ENCODE measurements at regions of chr19 and their contacts with region 1.

Region 1: GRCh38 chr19:45092747-45093678 is at the start of gene PPP1R37:
- DNase-seq: peak; percentile 91

Region 2: GRCh38 chr19:44972802-44973201 is 120.2 kb before region 1 on chr19:
- CTCF ChIA-PET with region 1: no interaction called
- POLR2A ChIA-PET with region 1: no interaction called
- DNase-seq: no peak

Region 3: GRCh38 chr19:45038931-45039893 is 53.8 kb before region 1 on chr19 and contains the start of gene CLASRP:
- CTCF ChIA-PET with region 1: no interaction called
- POLR2A ChIA-PET with region 1: interaction called, 10 read pairs
- DNase-seq: peak; percentile 94

Region 4: GRCh38 chr19:45079063-45079910 is 13.7 kb before region 1 on chr19 and contains the start of gene GEMIN7:
- CTCF ChIA-PET with region 1: no interaction called
- POLR2A ChIA-PET with region 1: interaction called, 44 read pairs
- DNase-seq: peak; percentile 86

Region 5: DNA sequence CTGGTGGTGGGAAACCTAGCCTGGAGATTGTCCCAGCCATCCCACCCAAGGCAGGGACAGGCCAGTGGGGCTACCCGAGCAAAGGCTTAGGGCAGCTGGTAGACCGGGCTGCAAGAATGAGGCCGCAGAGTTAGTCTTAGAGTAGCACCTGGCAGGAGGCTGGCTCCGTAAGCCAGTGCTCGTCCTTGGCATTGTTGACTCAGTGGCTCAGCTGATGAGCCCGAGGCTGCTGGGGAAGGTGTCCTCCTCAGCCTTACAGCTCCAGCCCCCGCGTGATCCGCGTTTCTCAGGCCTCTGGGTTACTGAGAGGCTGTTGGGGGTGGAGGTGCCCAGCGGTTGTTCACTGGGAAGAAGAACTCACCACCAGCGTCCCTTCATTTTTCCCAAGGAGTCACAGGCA is 24.7 kb after region 1 on chr19:
- CTCF ChIA-PET with region 1: no interaction called
- POLR2A ChIA-PET with region 1: interaction called, 10 read pairs
- DNase-seq: no peak

Region 6: DNA sequence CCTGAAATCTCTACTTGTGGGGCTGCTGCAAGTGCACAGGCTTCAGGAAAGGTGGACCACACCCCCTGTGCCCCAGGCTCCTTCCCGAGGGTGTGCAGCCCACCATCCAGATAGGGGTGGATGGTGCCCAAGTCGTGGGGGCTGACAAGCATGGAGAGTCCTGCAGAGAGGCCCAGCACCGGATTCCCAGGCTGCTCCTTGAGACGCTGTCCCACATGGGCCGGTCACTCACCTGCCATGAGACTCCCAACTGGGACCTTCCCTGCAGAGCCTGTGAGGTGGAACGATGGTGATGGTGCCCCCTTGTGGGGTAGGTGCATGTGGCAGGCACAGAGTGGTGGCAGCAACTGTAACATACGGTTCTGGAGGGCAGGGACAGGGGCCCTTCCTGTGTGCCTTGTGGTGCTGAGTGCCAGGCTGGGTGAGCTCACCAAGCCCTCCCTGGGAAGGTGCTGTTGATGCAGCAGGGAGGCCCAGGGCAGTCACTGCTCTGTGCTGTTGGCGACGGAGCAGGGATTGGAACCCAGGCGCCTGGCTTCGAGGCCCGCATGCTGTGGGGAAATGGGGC is 33.0 kb after region 1 on chr19:
- CTCF ChIA-PET with region 1: no interaction called
- POLR2A ChIA-PET with region 1: interaction called, 10 read pairs
- DNase-seq: peak; percentile 70

Region 7: DNA sequence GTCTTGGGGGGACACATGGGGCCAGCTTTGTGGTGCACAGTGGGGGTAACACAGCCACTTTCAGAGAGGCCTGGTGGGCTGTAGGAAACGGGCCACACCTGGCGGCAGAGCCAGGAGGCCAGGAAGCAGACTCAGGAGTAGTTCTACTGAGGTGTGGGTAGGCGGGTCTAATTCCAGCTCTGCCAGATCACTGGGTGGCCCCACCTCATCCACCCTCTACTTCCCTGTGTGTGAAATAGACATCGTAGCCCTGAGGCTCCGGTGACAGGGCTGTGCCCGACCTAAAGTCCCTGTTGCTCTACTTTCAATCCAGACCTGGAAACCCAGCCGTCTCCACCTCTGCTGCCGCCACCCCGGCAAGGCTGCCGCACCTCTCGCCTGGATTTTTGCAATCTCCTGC is 63.7 kb after region 1 on chr19:
- CTCF ChIA-PET with region 1: no interaction called
- POLR2A ChIA-PET with region 1: no interaction called
- DNase-seq: no peak

Region 8: DNA sequence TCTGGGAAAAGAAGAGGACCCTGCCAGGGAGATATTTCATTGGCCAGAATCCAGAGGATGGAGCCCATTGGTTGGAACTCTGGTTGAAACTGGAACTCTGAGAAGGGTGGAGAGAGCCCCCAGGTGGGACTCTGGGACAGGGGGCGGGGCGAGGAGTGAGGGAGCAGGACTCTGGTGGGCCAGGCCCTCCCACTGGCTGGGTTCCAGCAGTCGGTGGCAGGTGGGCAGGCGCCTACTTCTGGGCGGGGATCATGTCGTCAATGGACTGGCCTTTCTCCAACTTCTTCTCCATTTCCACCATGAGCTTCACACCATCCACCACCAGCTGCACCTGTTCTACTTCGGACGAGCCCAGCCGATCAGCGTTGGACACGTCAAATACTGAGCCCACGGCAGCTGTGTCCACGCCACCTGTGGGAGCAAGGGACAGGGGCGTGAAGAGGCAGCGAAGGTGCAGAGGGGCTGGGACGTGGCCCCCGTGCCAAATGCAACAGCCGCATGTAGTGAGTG is 213.6 kb after region 1 on chr19:
- CTCF ChIA-PET with region 1: no interaction called
- POLR2A ChIA-PET with region 1: no interaction called
- DNase-seq: no peak

Measured in HEK293T (cell line).